ENCODE measurements at regions of chr19 and their contacts with region 1.

Region 1: GRCh38 chr19:1540365-1540925 is 16.6 kb downstream of the PLK5 start:
- DNase-seq: no peak
- ATAC-seq: no peak
- H3K4me3 ChIP-seq: no peak overlapping the region
- H3K4me3 Mint-ChIP-seq: no peak overlapping the region
- H3K27ac ChIP-seq: no peak overlapping the region
- H3K27ac Mint-ChIP-seq: no peak overlapping the region
- H3K4me1 ChIP-seq: no peaks in the 10 kb centered on the region
- H3K4me1 Mint-ChIP-seq: no peaks in the 10 kb centered on the region
- H3K27me3 ChIP-seq: peaks cover 2% of the 10 kb centered on the region
- H3K27me3 Mint-ChIP-seq: peaks cover 6 to 11% of the 10 kb centered on the region in 2 donors
- CTCF ChIP-seq: no peak

Region 2: DNA sequence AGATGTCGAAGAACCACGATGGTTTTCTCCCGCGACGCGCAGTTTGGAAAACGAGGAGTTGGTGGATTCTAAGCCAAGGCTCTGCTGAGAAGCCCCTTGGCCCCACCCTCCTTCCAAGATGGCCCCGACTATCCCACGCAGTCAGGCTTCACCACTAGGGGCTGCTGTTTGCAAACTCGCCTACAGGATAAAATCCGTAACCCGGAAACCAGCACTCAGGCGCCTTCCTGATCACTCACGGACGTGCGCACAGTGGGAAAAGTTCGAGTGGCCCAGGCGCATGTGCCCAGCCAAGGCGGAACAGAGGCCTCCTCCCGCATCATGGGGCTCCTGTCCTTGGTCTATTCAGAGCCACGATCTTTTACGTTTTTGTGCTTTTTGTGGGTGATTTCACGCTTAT is 84.0 kb after region 1 on chr19:
- intact Hi-C with region 1: no loop called
- DNase-seq: peak; percentile 34 to 73
- ATAC-seq: peak; percentile 59 to 80 (median 78)
- H3K4me3 ChIP-seq: no peak overlapping the region
- H3K4me3 Mint-ChIP-seq: no peak overlapping the region
- H3K27ac ChIP-seq: no peak overlapping the region
- H3K27ac Mint-ChIP-seq: peak overlapping the region in 1 of 2 donors; percentile 52
- H3K4me1 ChIP-seq: no peaks in the 10 kb centered on the region
- H3K4me1 Mint-ChIP-seq: peaks cover 0 to 6% of the 10 kb centered on the region in 2 donors
- H3K27me3 ChIP-seq: no peaks in the 10 kb centered on the region
- H3K27me3 Mint-ChIP-seq: no peaks in the 10 kb centered on the region
- CTCF ChIP-seq: peak; percentile 31

Region 3: DNA sequence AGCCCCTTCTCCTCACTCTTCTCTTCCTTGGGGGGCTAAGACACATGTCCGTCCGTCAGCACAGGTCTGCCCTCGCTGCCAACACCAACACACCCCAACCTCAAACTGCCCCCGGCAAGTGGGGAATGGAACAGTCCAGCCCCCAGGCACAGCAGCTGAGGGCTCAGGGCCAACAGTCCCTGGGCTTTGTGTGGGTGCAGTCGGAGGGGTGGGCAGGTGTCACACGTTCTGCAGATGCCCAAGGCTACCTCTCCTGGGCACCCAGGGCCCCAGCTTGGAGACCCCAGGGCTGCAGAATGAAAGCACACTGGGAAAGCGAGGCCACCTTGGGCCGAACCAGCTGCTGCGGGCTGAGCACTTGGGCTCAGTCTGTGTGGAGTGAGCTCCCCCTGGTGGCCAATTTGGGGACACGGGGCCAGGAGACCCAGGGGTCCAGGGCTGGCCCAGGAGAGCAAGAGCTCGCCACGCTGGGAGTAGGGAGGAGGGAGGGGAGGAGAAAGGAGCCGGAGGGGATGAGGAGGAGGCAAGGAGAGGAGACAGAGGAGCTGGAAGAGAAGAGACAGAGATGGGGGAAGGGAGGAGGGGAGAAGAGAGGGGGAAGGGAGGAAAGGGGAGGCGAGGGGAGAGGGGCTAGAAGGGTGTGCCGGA is 285.6 kb after region 1 on chr19:
- intact Hi-C with region 1: loop called (anchors 10 kb)
- DNase-seq: peak; percentile 73 to 88
- ATAC-seq: peak; percentile 77 to 93 (median 84)
- H3K4me3 ChIP-seq: no peak overlapping the region
- H3K4me3 Mint-ChIP-seq: no peak overlapping the region
- H3K27ac ChIP-seq: no peak overlapping the region
- H3K27ac Mint-ChIP-seq: peak overlapping the region; percentile 31 to 53
- H3K4me1 ChIP-seq: peaks cover 9% of the 10 kb centered on the region
- H3K4me1 Mint-ChIP-seq: peaks cover 4 to 9% of the 10 kb centered on the region in 2 donors
- H3K27me3 ChIP-seq: no peaks in the 10 kb centered on the region
- H3K27me3 Mint-ChIP-seq: no peaks in the 10 kb centered on the region
- CTCF ChIP-seq: peak; percentile 70

Measured in natural killer cell (primary cell).